ENCODE measurements at regions of chr5 and their contacts with region 1.

Region 1: DNA sequence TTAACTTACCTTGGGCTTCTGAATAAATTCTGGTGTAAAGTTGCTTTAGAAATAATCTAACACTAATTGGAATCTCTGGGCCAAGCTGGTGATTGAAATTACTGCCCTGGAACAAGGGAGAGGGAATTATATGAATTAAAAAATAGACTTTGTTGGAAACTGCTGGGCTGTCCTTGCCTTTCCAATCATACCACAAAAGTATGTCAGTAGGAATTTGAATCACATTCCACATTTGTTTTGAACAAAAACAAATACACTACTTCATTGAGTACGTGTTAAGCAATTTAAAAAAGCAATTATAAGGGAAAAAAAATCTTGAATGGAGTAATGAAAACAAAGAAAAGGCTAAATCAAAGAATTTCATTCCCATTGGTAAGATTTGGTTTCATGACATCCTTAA is 102.5 kb upstream of the SREK1 start:
- DNase-seq: no peak
- H3K4me3 ChIP-seq: no peak overlapping the region
- H3K27me3 ChIP-seq: no peaks in the 10 kb centered on the region
- CTCF ChIP-seq: no peak

Region 2: GRCh38 chr5:65938256-65938655 is 103.4 kb before region 1 on chr5:
- CTCF ChIA-PET with region 1: no interaction called
- POLR2A ChIA-PET with region 1: no interaction called
- DNase-seq: no peak
- H3K4me3 ChIP-seq: no peak overlapping the region
- H3K27me3 ChIP-seq: no peaks in the 10 kb centered on the region
- CTCF ChIP-seq: no peak

Region 3: GRCh38 chr5:65961633-65962032 is 80.0 kb before region 1 on chr5:
- CTCF ChIA-PET with region 1: no interaction called
- POLR2A ChIA-PET with region 1: interaction called, 11 read pairs
- DNase-seq: no peak
- H3K4me3 ChIP-seq: no peak overlapping the region
- H3K27me3 ChIP-seq: no peaks in the 10 kb centered on the region
- CTCF ChIP-seq: no peak